PC-3 (cell line): ENCODE measurements at regions of chr11 and their contacts with region 1.

Region 1: GRCh38 chr11:23540101-23540561 is 679.9 kb upstream of the CCDC179 start:
- DNase-seq: peak; percentile 79
- ATAC-seq: peak; percentile 86
- H3K4me3 ChIP-seq: peak overlapping the region; percentile 9; the same call in 1 of the 2 replicates
- H3K27ac ChIP-seq: no peak overlapping the region
- H3K4me1 ChIP-seq: peaks cover 13% of the 10 kb centered on the region
- H3K27me3 ChIP-seq: no peaks in the 10 kb centered on the region
- CTCF ChIP-seq: peak; percentile 67

Region 2: DNA sequence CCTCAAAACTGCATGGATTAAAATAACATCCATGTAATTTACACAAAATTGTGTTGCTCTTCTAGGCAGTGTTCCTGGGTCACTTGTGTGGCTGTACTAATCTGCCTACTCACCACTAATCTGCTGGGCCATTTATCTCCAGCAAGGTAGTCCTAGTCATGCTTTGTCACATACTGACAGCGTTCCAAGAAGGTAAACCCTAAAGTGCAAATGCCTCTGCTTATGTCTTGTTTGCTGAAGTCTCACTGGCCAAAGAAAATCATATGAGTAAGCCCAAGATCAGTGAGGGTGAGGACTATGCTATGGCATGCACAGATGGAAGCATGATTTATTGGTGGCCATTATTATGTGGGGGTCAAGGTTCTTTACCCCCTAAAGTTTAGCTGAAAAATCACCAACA is 326.5 kb after region 1 on chr11:
- CTCF ChIA-PET with region 1: no interaction called
- POLR2A ChIA-PET with region 1: no interaction called
- intact Hi-C with region 1: loop called (anchors 2 kb)
- DNase-seq: peak; percentile 93
- ATAC-seq: peak; percentile 91
- H3K4me3 ChIP-seq: peak overlapping the region; percentile 29; the same call in 1 of the 2 replicates
- H3K27ac ChIP-seq: peak overlapping the region; percentile 72
- H3K4me1 ChIP-seq: peaks cover 22% of the 10 kb centered on the region
- H3K27me3 ChIP-seq: no peaks in the 10 kb centered on the region
- CTCF ChIP-seq: no peak

Region 3: DNA sequence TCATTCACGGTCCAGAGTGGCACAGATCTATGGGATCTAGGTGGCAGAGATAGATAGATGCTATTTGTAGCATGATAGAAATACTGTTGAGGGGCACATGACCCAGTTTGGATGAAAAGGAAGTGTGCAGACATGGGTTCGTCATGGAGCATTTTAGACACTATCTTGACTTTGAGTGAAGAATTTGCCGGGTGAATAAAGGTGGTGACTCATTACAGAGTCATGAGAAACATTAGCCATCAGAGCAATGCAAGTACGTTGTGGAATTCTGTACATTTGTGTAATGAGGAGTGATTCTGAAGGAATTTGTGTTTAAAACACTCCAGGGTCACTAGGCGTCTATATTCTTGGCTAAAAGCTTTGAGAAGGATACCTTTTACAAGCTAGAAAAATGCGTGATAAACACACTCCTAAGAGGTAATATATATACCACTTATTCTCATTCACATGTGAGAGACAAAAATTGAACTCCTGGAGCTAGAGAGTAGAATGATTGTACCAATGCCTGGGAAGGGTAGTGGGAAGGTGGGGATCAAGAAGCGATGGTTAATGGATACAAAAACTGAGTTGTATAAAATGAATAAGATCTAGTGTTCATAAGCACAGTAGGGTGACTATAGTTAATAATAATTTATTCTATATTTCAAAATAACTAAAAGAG is 363.0 kb after region 1 on chr11:
- CTCF ChIA-PET with region 1: no interaction called
- POLR2A ChIA-PET with region 1: no interaction called
- intact Hi-C with region 1: loop called (anchors 1 kb)
- DNase-seq: peak; percentile 84
- ATAC-seq: peak; percentile 92
- H3K4me3 ChIP-seq: no peak overlapping the region
- H3K27ac ChIP-seq: peak overlapping the region; percentile 35; the same call in 1 of the 2 replicates
- H3K4me1 ChIP-seq: peaks cover 7% of the 10 kb centered on the region
- H3K27me3 ChIP-seq: no peaks in the 10 kb centered on the region
- CTCF ChIP-seq: no peak

Region 4: DNA sequence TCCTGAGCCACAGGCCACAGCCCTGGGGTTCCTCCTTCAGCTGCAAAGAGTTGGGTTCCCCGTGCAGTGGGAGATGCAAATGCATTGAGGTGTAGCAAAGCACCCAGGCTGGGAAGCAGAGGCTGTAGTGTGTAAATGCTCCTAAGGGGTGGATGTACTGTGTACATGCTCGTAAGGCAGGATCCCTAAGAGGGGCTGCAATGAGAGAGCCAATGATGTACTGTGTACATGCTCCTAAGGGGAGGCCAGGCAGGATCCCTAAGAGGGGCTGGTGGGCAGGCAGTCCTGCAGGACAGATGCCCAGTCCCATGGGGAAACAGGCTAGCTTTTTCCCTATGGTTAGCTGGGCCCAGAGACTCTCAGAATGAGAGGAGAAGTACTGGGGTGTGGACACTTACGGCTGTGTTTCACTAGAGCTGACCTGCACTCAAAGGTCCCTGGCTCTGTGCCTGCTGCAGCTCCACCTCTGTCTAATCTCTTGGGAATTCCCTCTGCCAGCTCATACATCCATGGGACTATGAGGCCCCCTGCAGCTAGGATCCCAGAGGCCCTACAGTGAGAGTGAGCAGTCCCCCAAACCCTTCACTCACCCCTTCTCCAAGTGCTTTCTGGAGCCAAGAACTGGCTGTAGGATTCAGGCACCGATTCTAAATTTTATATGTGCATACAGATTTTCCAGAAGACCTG is 694.8 kb after region 1 on chr11:
- CTCF ChIA-PET with region 1: interaction called, 3 read pairs
- POLR2A ChIA-PET with region 1: no interaction called
- intact Hi-C with region 1: loop called (anchors 5 kb)
- DNase-seq: peak; percentile 42
- ATAC-seq: peak; percentile 77
- H3K4me3 ChIP-seq: no peak overlapping the region
- H3K27ac ChIP-seq: no peak overlapping the region
- H3K4me1 ChIP-seq: no peaks in the 10 kb centered on the region
- H3K27me3 ChIP-seq: no peaks in the 10 kb centered on the region
- CTCF ChIP-seq: peak; percentile 43; the same call in 1 of the 2 replicates

Region 5: DNA sequence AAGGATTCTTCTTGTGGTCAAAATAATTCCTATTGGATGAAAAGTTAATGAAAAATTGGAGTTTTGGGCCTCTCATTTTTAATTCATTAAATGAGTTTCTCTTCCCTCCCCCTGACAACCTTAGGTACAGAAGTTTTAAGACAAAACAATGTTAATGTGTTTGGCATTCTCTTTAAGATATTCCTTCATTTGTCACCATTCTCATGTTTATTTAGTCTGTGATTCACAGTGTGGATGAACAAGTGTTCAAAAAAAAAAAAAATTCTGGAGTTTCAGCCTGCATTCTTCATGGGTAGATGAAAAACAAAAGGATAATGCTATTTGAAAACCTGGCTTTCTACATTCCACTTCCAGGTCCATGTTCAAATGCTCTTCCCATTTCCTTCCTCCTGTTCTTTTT is 784.1 kb after region 1 on chr11:
- CTCF ChIA-PET with region 1: no interaction called
- POLR2A ChIA-PET with region 1: no interaction called
- intact Hi-C with region 1: loop called (anchors 5 kb)
- DNase-seq: peak; percentile 40
- ATAC-seq: peak; percentile 68
- H3K4me3 ChIP-seq: no peak overlapping the region
- H3K27ac ChIP-seq: no peak overlapping the region
- H3K4me1 ChIP-seq: peaks cover 8% of the 10 kb centered on the region
- H3K27me3 ChIP-seq: no peaks in the 10 kb centered on the region
- CTCF ChIP-seq: no peak